GM10248 (cell line): ENCODE measurements at regions of chr20 and their contacts with region 1.

Region 1: GRCh38 chr20:33915726-33916331 is 77.9 kb upstream of the RALY start:
- DNase-seq: peak; percentile 73
- CTCF ChIP-seq: peak; percentile 66

Region 2: DNA sequence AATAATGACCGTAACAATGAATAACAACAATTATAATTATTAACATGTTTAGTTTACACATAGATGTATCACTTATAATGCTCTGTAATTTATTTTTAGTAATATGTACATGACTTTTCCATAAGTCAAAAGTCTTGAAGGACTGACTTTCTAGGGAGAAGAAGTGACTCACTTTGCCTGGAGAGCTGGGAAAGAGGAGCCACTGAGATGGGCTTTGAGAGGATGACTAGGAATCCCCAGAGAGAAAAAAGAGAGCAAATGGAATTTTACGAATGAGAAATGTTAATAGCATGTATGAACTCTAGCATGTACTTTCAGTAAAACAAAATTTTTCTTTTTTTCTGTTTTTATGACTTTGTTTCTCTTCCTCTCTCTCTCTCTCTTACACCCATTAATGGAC is 10.0 kb after region 1 on chr20:
- CTCF ChIA-PET with region 1: interaction called, 40 read pairs
- POLR2A ChIA-PET with region 1: no interaction called
- DNase-seq: no peak
- CTCF ChIP-seq: no peak

Region 3: GRCh38 chr20:33933469-33933909 is 17.7 kb after region 1 on chr20:
- CTCF ChIA-PET with region 1: interaction called, 40 read pairs
- POLR2A ChIA-PET with region 1: no interaction called
- DNase-seq: peak; percentile 71
- CTCF ChIP-seq: peak; percentile 58

Region 4: DNA sequence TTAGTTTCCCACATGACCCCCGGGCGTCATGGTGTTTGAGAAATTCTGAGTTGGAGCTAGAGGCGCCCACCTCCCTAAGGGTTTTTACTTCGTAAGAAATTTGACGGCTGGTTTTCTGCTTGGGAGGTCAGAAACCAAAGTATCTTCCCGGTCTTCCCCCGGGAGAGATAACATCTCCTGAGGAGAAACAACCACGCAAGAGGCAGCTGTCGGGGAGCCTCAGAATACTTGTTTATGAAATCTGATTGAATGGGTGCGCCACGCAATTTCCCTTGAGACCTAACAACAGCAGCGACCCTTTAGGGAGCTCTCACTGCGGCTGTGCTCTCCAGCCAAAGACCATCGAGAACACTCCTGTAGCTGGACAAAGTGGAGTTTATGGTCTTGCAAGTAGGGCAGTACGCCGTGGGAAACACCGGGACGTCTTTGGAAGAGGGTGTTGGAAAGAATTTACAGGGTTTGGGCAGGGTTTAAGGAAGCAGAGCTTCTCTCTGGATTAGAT is 196.8 kb after region 1 on chr20:
- CTCF ChIA-PET with region 1: no interaction called
- POLR2A ChIA-PET with region 1: no interaction called
- DNase-seq: peak; percentile 31
- CTCF ChIP-seq: no peak